ENCODE measurements at regions of chr20 and their contacts with region 1.

Region 1: DNA sequence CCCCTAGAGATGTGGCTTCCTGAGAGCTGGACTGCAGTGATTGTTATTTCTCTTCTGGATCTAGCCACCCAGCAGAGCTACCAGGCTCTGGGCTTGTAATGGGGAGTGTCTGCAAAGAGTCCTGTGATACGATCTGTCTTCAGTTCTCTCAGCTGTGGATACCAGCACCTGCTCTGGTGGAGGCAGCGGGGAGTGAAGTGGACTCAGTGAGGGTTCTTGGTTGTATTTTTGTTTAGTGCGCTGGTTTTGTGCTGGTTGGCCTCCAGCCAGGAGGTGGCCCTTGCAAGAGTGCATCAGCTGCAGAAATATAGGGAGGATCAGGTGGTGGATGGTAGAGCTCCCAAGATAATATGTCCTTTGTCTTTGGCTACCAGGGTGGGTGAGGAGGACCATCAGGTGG is 33.7 kb downstream of the PAX1 start:
- DNase-seq: no peak
- ATAC-seq: no peak
- H3K4me3 ChIP-seq: no peak overlapping the region
- H3K27ac ChIP-seq: no peak overlapping the region
- H3K4me1 ChIP-seq: no peaks in the 10 kb centered on the region
- H3K27me3 ChIP-seq: no peaks in the 10 kb centered on the region
- CTCF ChIP-seq: no peak

Region 2: GRCh38 chr20:21860871-21861270 is 121.7 kb after region 1 on chr20:
- CTCF ChIA-PET with region 1: no interaction called
- POLR2A ChIA-PET with region 1: interaction called, 14 read pairs
- in situ Hi-C with region 1: no loop called
- intact Hi-C with region 1: no loop called
- DNase-seq: no peak
- ATAC-seq: no peak
- H3K4me3 ChIP-seq: no peak overlapping the region
- H3K27ac ChIP-seq: no peak overlapping the region
- H3K4me1 ChIP-seq: no peaks in the 10 kb centered on the region
- H3K27me3 ChIP-seq: no peaks in the 10 kb centered on the region
- CTCF ChIP-seq: no peak

Measured in Panc1 (cell line).